Cardiac septum (tissue), 1 donor: ENCODE measurements at regions of chr11 and their contacts with region 1.

Region 1: GRCh38 chr11:12170984-12171383 is 60.6 kb downstream of the MICAL2 start:
- DNase-seq: no peak

Region 2: GRCh38 chr11:11931461-11932055 is 239.4 kb before region 1 on chr11:
- intact Hi-C with region 1: no loop called
- DNase-seq: no peak

Region 3: DNA sequence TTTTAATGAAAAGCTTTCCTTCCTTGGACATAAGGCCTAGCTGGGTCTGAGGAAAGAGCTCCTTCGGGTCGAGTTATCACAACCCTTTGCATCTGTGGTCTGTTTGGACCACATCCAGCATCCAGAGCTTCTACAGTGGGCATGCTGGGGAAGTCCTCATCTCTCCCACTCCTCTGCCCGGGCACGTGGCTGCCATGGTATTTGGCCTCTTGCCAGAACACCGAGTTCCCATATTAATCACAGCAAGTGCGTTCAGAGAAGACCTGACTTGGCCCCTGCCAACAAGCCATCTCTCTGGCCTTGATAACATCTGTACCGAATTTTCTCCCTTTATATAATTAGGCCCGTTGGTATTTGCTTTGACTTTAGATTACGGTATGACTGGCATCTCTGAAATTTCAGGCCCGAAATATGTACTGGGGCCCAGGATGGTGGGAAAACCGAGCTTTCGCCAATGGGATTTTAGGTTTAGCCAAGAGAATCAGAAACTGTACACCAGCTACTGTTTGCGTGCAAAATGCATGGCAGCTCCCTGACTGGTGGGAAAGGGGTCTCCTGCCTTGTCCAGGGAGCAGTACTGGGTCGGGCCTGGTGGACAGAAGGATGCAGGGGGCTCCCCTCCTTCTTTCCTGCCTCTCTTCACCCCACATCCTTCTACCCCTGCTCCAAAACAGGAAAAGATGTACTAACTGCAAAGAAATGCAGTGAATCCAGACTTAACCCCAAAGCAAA is 29.5 kb after region 1 on chr11:
- intact Hi-C with region 1: loop called (anchors 2 kb)
- DNase-seq: peak; percentile 85